PC-9 (cell line): ENCODE measurements at regions of chr3 and their contacts with region 1.

Region 1: GRCh38 chr3:195337747-195338146 is 66.8 kb upstream of the XXYLT1 start:
- DNase-seq: no peak
- H3K4me3 ChIP-seq: no peak overlapping the region
- H3K27ac ChIP-seq: no peak overlapping the region
- H3K4me1 ChIP-seq: no peaks in the 10 kb centered on the region
- H3K27me3 ChIP-seq: no peaks in the 10 kb centered on the region
- CTCF ChIP-seq: no peak

Region 2: DNA sequence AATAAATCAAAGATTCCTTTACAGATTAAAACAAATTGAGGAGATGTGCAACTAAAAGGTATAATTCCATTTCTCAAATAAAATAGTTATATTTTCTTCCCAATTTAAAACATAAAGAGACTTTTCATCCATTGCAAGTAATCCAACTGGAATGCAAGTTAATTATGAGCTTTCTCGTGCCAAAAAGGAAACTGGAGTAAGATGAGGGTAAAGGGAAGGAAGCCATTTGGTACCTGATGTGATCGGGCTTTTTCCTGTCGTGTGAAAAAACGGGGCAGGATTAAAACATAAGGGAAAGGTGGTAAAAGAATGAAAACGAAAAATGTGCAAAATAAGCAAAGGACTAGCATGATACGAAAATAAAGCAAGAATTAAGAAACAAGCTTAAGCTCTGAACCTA is 25.0 kb before region 1 on chr3:
- CTCF ChIA-PET with region 1: interaction called, 10 read pairs
- POLR2A ChIA-PET with region 1: no interaction called
- intact Hi-C with region 1: no loop called
- DNase-seq: no peak
- H3K4me3 ChIP-seq: no peak overlapping the region
- H3K27ac ChIP-seq: no peak overlapping the region
- H3K4me1 ChIP-seq: no peaks in the 10 kb centered on the region
- H3K27me3 ChIP-seq: no peaks in the 10 kb centered on the region
- CTCF ChIP-seq: no peak